ENCODE measurements at regions of chr18 and their contacts with region 1.

Region 1: GRCh38 chr18:46281185-46282176 is 177.3 kb downstream of the HAUS1 start:
- DNase-seq: peak; percentile 74
- H3K4me3 ChIP-seq: no peak overlapping the region; a peak in 1 of 4 replicates
- H3K27ac ChIP-seq: no peak overlapping the region
- H3K4me1 ChIP-seq: peaks cover 12 to 21% of the 10 kb centered on the region in 2 experiments; a peak in 2 of 4 replicates
- H3K27me3 ChIP-seq: no peaks in the 10 kb centered on the region
- CTCF ChIP-seq: peak; percentile 78
- EP300 ChIP-seq: no peak
- RAD21 ChIP-seq: peak; percentile 94

Region 2: DNA sequence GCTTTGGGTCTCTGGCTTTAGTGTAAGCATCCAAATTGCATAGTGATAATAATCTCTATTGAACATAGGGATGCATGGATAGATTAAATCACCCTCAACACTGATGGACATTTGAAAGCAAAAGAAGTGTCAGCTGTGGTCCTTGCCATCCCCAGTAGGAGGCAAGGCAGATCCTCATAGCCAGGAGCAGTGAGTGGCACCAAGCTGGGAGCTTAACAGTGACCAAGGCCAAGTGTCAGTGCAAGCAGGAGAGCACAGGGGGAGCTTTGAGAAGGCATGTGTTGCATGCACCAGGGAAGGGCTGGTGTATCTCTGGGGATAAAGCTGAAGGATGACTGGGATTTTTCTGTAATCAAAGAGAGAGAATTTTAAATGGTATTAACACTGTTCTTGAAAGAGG is 542.8 kb before region 1 on chr18:
- CTCF ChIA-PET with region 1: no interaction called
- POLR2A ChIA-PET with region 1: no interaction called
- DNase-seq: no peak
- H3K4me3 ChIP-seq: no peak overlapping the region
- H3K27ac ChIP-seq: no peak overlapping the region
- H3K4me1 ChIP-seq: peaks cover 0 to 4% of the 10 kb centered on the region in 2 experiments; a peak in 1 of 4 replicates
- H3K27me3 ChIP-seq: no peaks in the 10 kb centered on the region
- CTCF ChIP-seq: 0 out of 2 replicates have a peak, but pooled peaks have one; percentile 7
- EP300 ChIP-seq: no peak
- RAD21 ChIP-seq: peak; percentile 13; the same call in 1 of the 2 replicates

Region 3: GRCh38 chr18:46333431-46334135 is 52.1 kb after region 1 on chr18:
- CTCF ChIA-PET with region 1: interaction called, 14 read pairs
- POLR2A ChIA-PET with region 1: no interaction called
- DNase-seq: peak; percentile 96
- H3K4me3 ChIP-seq: peak overlapping the region; percentile 57 to 60
- H3K27ac ChIP-seq: peak overlapping the region in 1 of 2 experiments; percentile 86; a peak in 2 of 4 replicates
- H3K4me1 ChIP-seq: peaks cover 11 to 41% of the 10 kb centered on the region in 2 experiments; a peak in 3 of 4 replicates
- H3K27me3 ChIP-seq: peaks cover 6% of the 10 kb centered on the region; the same call in 1 of the 2 replicates
- CTCF ChIP-seq: no peak
- EP300 ChIP-seq: no peak
- RAD21 ChIP-seq: no peak

Region 4: GRCh38 chr18:46386788-46387187 is 105.3 kb after region 1 on chr18:
- CTCF ChIA-PET with region 1: interaction called, 20 read pairs
- POLR2A ChIA-PET with region 1: no interaction called
- DNase-seq: no peak
- H3K4me3 ChIP-seq: no peak overlapping the region
- H3K27ac ChIP-seq: no peak overlapping the region
- H3K4me1 ChIP-seq: peaks cover 0 to 29% of the 10 kb centered on the region in 2 experiments; a peak in 1 of 4 replicates
- H3K27me3 ChIP-seq: no peaks in the 10 kb centered on the region
- CTCF ChIP-seq: no peak
- EP300 ChIP-seq: no peak
- RAD21 ChIP-seq: no peak

Region 5: DNA sequence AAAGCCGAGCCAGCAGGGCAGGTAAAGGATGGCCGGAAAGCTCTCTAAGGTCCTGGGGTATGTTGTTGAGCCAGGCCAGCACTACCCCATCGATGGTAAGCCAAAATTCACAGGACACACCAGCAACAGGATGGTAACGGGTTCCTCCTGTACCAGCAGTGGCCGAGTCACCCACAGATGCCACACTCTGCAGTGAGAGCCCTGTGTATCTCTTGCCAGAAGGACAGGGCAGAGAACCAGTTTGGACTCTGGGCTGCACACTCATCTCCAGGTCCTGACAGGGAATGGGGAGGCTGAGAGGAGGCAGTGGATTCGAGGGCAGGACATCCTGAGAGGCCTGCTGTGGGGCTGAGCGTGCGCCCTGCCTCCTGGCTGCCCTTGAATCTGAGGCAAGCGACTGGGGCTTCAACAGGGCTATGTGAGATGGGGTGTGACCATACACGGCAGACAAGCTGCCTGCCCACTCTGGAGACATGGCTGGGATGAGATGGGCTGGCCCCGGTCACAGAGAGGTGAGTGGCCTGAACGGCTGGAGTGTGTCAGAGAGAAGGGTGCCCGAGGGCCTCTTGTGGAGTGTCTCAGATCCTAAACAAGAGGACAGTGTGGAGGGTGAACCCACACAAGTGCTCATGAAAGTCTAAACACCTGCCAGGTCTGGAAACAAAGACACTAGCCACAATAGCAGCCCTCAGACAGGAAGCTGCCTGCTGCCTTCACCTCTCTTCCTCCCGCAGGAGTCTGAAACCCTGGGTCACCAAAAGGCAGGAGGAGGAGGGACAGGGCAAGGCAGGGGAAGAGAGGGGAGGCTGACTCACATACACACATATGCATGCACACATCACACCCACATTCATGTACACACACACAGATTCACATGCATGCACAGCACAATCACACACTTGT is 193.3 kb after region 1 on chr18:
- CTCF ChIA-PET with region 1: interaction called, 116 read pairs
- POLR2A ChIA-PET with region 1: no interaction called
- DNase-seq: peak; percentile 59
- H3K4me3 ChIP-seq: no peak overlapping the region
- H3K27ac ChIP-seq: no peak overlapping the region
- H3K4me1 ChIP-seq: peaks cover 0 to 17% of the 10 kb centered on the region in 2 experiments; a peak in 1 of 4 replicates
- H3K27me3 ChIP-seq: no peaks in the 10 kb centered on the region; the same call in 1 of the 2 replicates
- CTCF ChIP-seq: no peak
- EP300 ChIP-seq: no peak
- RAD21 ChIP-seq: peak; percentile 34

Region 6: GRCh38 chr18:46518438-46518837 is 237.0 kb after region 1 on chr18:
- CTCF ChIA-PET with region 1: interaction called, 68 read pairs
- POLR2A ChIA-PET with region 1: no interaction called
- DNase-seq: peak; percentile 61
- H3K4me3 ChIP-seq: no peak overlapping the region
- H3K27ac ChIP-seq: no peak overlapping the region
- H3K4me1 ChIP-seq: no peaks in the 10 kb centered on the region
- H3K27me3 ChIP-seq: no peaks in the 10 kb centered on the region
- CTCF ChIP-seq: peak; percentile 22; the same call in 1 of the 2 replicates
- EP300 ChIP-seq: no peak
- RAD21 ChIP-seq: peak; percentile 72

Region 7: GRCh38 chr18:46591783-46592399 is 310.4 kb after region 1 on chr18:
- CTCF ChIA-PET with region 1: no interaction called
- POLR2A ChIA-PET with region 1: no interaction called
- DNase-seq: no peak
- H3K4me3 ChIP-seq: no peak overlapping the region
- H3K27ac ChIP-seq: no peak overlapping the region
- H3K4me1 ChIP-seq: no peaks in the 10 kb centered on the region
- H3K27me3 ChIP-seq: no peaks in the 10 kb centered on the region; the same call in 1 of the 2 replicates
- CTCF ChIP-seq: no peak
- EP300 ChIP-seq: no peak
- RAD21 ChIP-seq: no peak

Region 8: GRCh38 chr18:46672062-46672970 is 390.8 kb after region 1 on chr18:
- CTCF ChIA-PET with region 1: interaction called, 328 read pairs
- POLR2A ChIA-PET with region 1: no interaction called
- DNase-seq: no peak
- H3K4me3 ChIP-seq: no peak overlapping the region
- H3K27ac ChIP-seq: no peak overlapping the region
- H3K4me1 ChIP-seq: no peaks in the 10 kb centered on the region
- H3K27me3 ChIP-seq: no peaks in the 10 kb centered on the region
- CTCF ChIP-seq: no peak
- EP300 ChIP-seq: no peak
- RAD21 ChIP-seq: no peak

Measured in SK-N-SH (cell line).